Lower leg skin (tissue), 4 donors: ENCODE measurements at regions of chr3 and their contacts with region 1.

Region 1: GRCh38 chr3:134212906-134213665 is 37.6 kb downstream of the RYK start:
- DNase-seq: peak; percentile 84 to 97
- H3K4me3 ChIP-seq: no peak overlapping the region
- CTCF ChIP-seq: peak in 1 of 3 donors; percentile 84
- POLR2A ChIP-seq: no peak

Region 2: GRCh38 chr3:133930341-133930933 is 282.6 kb before region 1 on chr3:
- intact Hi-C with region 1: loop called (anchors 10 kb)
- DNase-seq: no peak
- H3K4me3 ChIP-seq: no peak overlapping the region
- CTCF ChIP-seq: peak in 1 of 3 donors; percentile 9
- POLR2A ChIP-seq: no peak

Region 3: DNA sequence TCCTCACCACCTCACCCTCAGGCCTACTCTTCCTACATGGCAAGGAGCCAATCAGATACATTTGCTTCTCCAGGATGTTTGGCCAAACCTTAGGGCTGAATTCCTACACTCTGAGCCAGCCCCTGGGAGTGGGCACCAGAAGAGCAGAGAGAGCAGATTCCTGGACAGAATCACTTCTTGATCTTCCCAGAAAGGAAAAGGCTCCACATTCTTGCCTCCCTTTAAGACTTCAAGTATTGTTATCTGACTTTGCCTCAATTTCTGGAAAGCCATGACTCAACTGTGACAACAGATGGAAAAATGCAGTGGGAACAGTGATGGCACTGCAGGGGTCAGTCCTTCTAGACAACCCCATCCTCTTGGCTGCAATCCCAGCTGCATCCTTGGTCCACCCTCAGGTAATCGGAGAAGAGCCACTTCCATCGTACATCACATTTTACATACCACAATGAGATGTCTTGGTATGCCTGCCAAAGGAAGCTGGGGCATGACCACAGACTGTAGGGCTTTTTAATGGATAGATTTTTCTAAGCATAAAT is 204.4 kb before region 1 on chr3:
- intact Hi-C with region 1: no loop called
- DNase-seq: no peak
- H3K4me3 ChIP-seq: no peak overlapping the region
- CTCF ChIP-seq: no peak
- POLR2A ChIP-seq: no peak

Region 4: DNA sequence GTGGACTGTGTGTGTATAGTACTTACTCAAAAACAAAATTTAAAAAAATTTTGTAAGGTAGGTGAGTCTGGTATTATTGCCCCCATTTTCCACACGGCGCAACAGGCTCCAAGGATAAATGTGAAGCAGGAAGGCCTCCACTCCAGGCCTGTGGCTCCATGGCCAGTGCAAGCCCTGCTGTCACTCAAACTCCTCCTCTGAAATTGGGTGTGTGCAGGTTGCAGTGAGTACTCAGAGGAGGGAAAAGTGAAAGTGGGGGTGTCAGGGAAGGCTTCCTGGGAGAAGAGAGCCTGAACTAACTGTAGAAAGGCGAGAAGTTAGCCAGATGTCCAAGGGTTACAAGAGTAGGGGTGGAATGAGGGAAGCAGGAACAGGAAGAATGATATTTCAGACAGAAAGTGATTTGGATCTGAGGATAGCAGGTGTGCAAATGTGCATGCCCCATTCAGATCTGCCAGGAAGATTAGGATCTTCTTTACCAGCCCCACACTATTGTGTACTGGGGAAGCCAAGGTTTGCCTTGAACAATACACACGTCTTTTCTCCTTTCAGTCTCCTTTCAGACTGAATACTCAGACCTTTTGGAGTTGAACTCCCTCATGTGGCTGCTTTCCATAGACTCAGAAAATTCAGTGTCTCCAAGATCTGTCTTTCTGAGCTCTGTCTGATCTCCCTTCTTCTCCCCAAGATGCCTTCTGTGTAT is 86.2 kb after region 1 on chr3:
- intact Hi-C with region 1: loop called (anchors 5 kb)
- DNase-seq: no peak
- H3K4me3 ChIP-seq: no peak overlapping the region
- CTCF ChIP-seq: no peak
- POLR2A ChIP-seq: no peak

Region 5: DNA sequence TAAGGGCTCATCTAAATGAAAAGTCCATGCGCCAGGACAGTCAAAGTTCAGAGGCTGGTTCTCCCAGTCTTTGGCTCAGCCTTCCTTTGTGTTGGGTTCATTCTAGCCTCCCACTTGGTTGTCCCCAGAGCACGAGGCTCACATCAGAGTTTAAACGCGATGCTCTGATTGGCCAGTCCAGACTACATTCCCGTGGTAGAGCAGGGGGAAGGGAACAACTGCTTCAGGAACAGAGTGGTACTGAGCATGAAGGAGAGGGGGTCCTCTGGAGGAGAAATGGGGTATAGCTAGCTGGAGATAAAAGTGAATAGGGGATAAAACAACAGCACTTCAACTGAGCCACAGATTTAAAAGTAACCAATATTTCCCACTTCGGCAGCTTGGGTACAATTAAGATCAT is 240.5 kb after region 1 on chr3:
- intact Hi-C with region 1: loop called (anchors 10 kb)
- DNase-seq: no peak
- H3K4me3 ChIP-seq: no peak overlapping the region
- CTCF ChIP-seq: no peak
- POLR2A ChIP-seq: no peak

Region 6: GRCh38 chr3:135148398-135148797 is 935.3 kb after region 1 on chr3:
- intact Hi-C with region 1: no loop called
- DNase-seq: peak in 1 of 2 donors; percentile 47
- H3K4me3 ChIP-seq: no peak overlapping the region
- CTCF ChIP-seq: no peak
- POLR2A ChIP-seq: no peak